Heart right ventricle (tissue), 16 donors: ENCODE measurements at regions of chr6 and their contacts with region 1.

Region 1: DNA sequence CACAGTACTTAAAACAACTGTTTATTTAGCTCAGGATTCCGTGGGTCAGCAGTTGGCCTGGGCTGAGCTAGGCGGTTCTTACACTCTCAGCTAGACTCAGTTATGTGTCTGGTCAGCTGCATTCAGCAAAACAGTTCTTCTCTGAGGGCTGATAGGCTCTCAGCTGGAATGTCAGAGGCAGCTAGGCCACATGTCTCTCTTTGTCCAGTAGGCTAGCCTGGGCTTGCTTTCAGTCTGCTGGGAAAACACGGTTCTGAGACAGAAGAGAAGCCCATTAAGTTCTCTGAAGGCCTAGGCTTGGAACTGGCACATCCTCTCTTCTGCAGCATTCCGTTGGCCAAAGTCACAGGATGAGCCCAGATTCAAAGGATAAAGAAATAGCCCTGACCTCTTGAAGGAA is 65.6 kb downstream of the TULP4 start:
- DNase-seq: no peak
- ATAC-seq: peak in 3 of 8 donors; percentile 42 to 59 (median 44)
- H3K4me3 ChIP-seq: no peak overlapping the region
- H3K27ac ChIP-seq: no peak overlapping the region
- H3K4me1 ChIP-seq: peaks cover 0 to 19% (median 0%) of the 10 kb centered on the region in 9 donors
- H3K27me3 ChIP-seq: no peaks in the 10 kb centered on the region
- CTCF ChIP-seq: no peak

Region 2: DNA sequence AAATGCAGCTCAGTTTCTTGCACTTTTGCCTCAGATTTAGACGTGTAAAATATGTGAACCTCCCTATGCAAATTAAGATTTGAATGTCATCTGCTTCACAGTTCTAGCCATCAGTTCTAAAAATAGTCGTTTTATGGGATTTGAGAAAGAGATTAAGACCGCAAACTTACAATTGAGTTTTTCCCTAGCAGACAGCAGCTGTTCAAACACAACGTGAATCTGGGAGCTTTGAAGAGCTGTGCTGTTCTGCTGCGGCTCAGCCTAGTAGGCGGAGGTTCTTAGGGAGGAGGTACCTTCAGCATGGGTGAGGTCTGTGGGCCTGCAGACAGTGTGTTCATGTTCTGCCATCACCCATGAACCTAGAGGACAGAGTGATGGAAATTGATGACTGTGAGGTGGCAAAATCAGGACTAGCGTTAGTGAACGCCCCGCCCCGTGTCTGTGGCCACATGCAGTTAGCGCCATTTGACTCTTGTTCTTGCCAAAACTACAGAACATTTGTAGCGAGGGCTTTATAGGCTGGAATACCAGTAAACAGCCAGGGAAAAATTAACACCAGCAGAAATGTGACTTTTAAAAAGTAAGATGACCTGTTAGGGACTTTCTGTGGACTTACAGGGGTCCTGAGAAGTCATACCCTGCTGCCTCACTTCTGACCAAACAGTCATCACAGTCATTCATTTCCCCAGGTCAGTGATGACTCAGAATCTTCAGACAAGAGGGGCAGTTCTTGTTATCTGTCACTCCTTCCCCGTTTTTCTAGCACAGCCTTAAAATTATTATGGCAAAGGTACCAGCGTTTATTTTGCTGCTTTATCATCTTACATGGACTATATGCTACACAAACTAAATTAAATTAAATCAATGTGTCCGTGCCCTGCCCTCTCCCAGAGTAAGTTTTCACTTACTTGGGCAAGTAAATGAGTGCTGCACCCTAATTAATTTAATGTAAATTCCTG is 97.8 kb after region 1 on chr6:
- intact Hi-C with region 1: loop called in 1 of 10 experiments (anchors 10 kb)
- DNase-seq: peak in 1 of 2 donors; percentile 4
- ATAC-seq: peak in 6 of 8 donors; percentile 31 to 80 (median 58)
- H3K4me3 ChIP-seq: no peak overlapping the region
- H3K27ac ChIP-seq: peak overlapping the region in 2 of 10 donors; percentile 13 to 25
- H3K4me1 ChIP-seq: peaks cover 0 to 4% (median 0%) of the 10 kb centered on the region in 9 donors
- H3K27me3 ChIP-seq: no peaks in the 10 kb centered on the region
- CTCF ChIP-seq: no peak